K562 (cell line): ENCODE measurements at regions of chr15 and their contacts with region 1.

Region 1: GRCh38 chr15:63939531-63940130 is 105.9 kb upstream of the HERC1 start:
- DNase-seq: peak in 1 of 4 experiments; percentile 46
- ATAC-seq: no peak
- H3K4me3 ChIP-seq: no peak overlapping the region
- H3K27ac ChIP-seq: no peak overlapping the region
- H3K4me1 ChIP-seq: peaks cover 8 to 18% of the 10 kb centered on the region in 2 experiments; a peak in 3 of 5 replicates
- H3K27me3 ChIP-seq: no peaks in the 10 kb centered on the region
- CTCF ChIP-seq: no peak
- EP300 ChIP-seq: no peak
- POLR2A ChIP-seq: no peak
- RAD21 ChIP-seq: no peak

Region 2: GRCh38 chr15:62847900-62848489 is 1091.6 kb before region 1 on chr15:
- CTCF ChIA-PET with region 1: no interaction called
- POLR2A ChIA-PET with region 1: no interaction called
- in situ Hi-C with region 1: no loop called
- intact Hi-C with region 1: no loop called
- DNase-seq: peak; percentile 67 to 76 (median 70)
- ATAC-seq: peak; percentile 93
- H3K4me3 ChIP-seq: no peak overlapping the region
- H3K27ac ChIP-seq: no peak overlapping the region
- H3K4me1 ChIP-seq: no peaks in the 10 kb centered on the region
- H3K27me3 ChIP-seq: peaks cover 18 to 51% of the 10 kb centered on the region in 2 experiments; a peak in 4 of 5 replicates
- CTCF ChIP-seq: peak; percentile 67 to 86 (median 76)
- EP300 ChIP-seq: no peak
- POLR2A ChIP-seq: no peak
- RAD21 ChIP-seq: peak; percentile 55 to 74

Region 3: GRCh38 chr15:63836579-63836978 is 103.1 kb before region 1 on chr15:
- CTCF ChIA-PET with region 1: no interaction called
- POLR2A ChIA-PET with region 1: no interaction called
- in situ Hi-C with region 1: no loop called
- intact Hi-C with region 1: no loop called
- DNase-seq: peak in 2 of 4 experiments; percentile 23 to 56
- ATAC-seq: no peak
- H3K4me3 ChIP-seq: no peak overlapping the region
- H3K27ac ChIP-seq: peak overlapping the region; percentile 48
- H3K4me1 ChIP-seq: peaks cover 40 to 51% of the 10 kb centered on the region in 2 experiments
- H3K27me3 ChIP-seq: no peaks in the 10 kb centered on the region
- CTCF ChIP-seq: no peak
- EP300 ChIP-seq: peak; percentile 42; the same call in 1 of the 2 replicates
- POLR2A ChIP-seq: no peak
- RAD21 ChIP-seq: no peak

Region 4: DNA sequence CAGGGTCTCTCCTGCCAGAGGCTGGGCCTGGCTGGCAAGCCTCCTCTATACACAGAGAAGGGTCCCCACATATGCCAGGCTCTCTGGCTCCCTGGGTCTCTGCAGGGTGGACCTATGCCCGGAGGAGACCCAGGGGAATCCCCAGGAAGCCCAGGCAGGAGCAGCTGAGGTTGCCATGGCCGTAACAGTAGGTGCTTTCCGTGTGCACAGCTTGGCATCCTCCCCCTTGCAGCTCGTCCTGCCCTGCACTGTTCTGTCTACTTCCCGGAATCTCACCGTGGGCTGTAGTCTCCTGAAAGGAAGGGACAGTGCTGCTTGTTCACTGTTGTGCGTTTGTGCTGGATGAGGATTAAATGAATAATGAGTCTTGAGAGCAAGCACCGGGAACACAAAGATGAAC is 58.9 kb after region 1 on chr15:
- CTCF ChIA-PET with region 1: no interaction called
- POLR2A ChIA-PET with region 1: no interaction called
- in situ Hi-C with region 1: no loop called
- intact Hi-C with region 1: loop called (anchors 10 kb)
- DNase-seq: no peak
- ATAC-seq: no peak
- H3K4me3 ChIP-seq: no peak overlapping the region
- H3K27ac ChIP-seq: no peak overlapping the region
- H3K4me1 ChIP-seq: peaks cover 2 to 3% of the 10 kb centered on the region in 2 experiments; a peak in 3 of 5 replicates
- H3K27me3 ChIP-seq: no peaks in the 10 kb centered on the region
- CTCF ChIP-seq: no peak
- EP300 ChIP-seq: no peak
- POLR2A ChIP-seq: no peak
- RAD21 ChIP-seq: no peak